WTC11 (cell line): ENCODE measurements at regions of chr19 and their contacts with region 1.

Region 1: GRCh38 chr19:53912653-53913052 is 3.6 kb downstream of the CACNG7 start:
- DNase-seq: peak; percentile 88
- ATAC-seq: peak; percentile 49
- H3K4me3 Mint-ChIP-seq: no peak overlapping the region
- H3K27ac Mint-ChIP-seq: no peak overlapping the region; the same call in 1 of the 2 replicates
- H3K4me1 Mint-ChIP-seq: peaks cover 17% of the 10 kb centered on the region
- H3K27me3 Mint-ChIP-seq: peaks cover 34% of the 10 kb centered on the region
- CTCF ChIP-seq: peak; percentile 92

Region 2: GRCh38 chr19:52307275-52307674 is 1605.4 kb before region 1 on chr19:
- CTCF ChIA-PET with region 1: no interaction called
- POLR2A ChIA-PET with region 1: no interaction called
- DNase-seq: peak; percentile 35
- ATAC-seq: no peak
- H3K4me3 Mint-ChIP-seq: no peak overlapping the region
- H3K27ac Mint-ChIP-seq: no peak overlapping the region
- H3K4me1 Mint-ChIP-seq: no peaks in the 10 kb centered on the region
- H3K27me3 Mint-ChIP-seq: peaks cover 9% of the 10 kb centered on the region
- CTCF ChIP-seq: no peak

Region 3: DNA sequence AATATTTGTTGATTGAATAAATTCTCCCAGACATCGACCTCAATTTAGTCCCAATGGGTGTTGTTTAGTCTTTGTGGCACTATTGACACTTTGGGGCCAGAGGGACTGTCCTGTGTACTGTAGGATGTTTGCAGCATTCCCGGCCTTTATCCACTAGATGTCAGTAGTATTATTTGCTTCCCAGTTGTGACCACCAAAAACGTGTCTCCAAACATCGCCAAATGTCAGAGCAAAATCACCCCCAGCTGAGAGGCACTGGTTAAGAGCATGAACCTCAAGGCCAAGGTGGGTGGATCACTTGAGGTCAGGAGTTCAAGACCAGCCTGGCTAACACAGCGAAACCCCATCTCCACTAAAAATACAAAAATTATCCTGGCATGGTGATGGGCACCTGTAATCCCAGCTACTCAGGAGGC is 103.9 kb before region 1 on chr19:
- CTCF ChIA-PET with region 1: interaction called, 24 read pairs
- POLR2A ChIA-PET with region 1: no interaction called
- DNase-seq: peak; percentile 40
- ATAC-seq: peak; percentile 74
- H3K4me3 Mint-ChIP-seq: no peak overlapping the region
- H3K27ac Mint-ChIP-seq: no peak overlapping the region
- H3K4me1 Mint-ChIP-seq: peaks cover 10% of the 10 kb centered on the region
- H3K27me3 Mint-ChIP-seq: peaks cover 9% of the 10 kb centered on the region
- CTCF ChIP-seq: no peak

Region 4: GRCh38 chr19:53892981-53893325 is 19.7 kb before region 1 on chr19:
- CTCF ChIA-PET with region 1: interaction called, 58 read pairs
- POLR2A ChIA-PET with region 1: interaction called, 4 read pairs
- DNase-seq: peak; percentile 69
- ATAC-seq: peak; percentile 61
- H3K4me3 Mint-ChIP-seq: no peak overlapping the region
- H3K27ac Mint-ChIP-seq: peak overlapping the region; percentile 91; the same call in 1 of the 2 replicates
- H3K4me1 Mint-ChIP-seq: peaks cover 35% of the 10 kb centered on the region
- H3K27me3 Mint-ChIP-seq: peaks cover 2% of the 10 kb centered on the region; the same call in 1 of the 2 replicates
- CTCF ChIP-seq: no peak

Region 5: GRCh38 chr19:53936029-53936428 is 23.4 kb after region 1 on chr19:
- CTCF ChIA-PET with region 1: interaction called, 102 read pairs
- POLR2A ChIA-PET with region 1: no interaction called
- DNase-seq: no peak
- ATAC-seq: peak; percentile 67; the same call in 1 of the 2 replicates
- H3K4me3 Mint-ChIP-seq: no peak overlapping the region
- H3K27ac Mint-ChIP-seq: 0 out of 2 replicates have a peak overlapping the region, but pooled peaks have one; percentile 28
- H3K4me1 Mint-ChIP-seq: peaks cover 7% of the 10 kb centered on the region
- H3K27me3 Mint-ChIP-seq: no peaks in the 10 kb centered on the region; the same call in 1 of the 2 replicates
- CTCF ChIP-seq: no peak

Region 6: GRCh38 chr19:53958168-53958571 is 45.5 kb after region 1 on chr19:
- CTCF ChIA-PET with region 1: interaction called, 10 read pairs
- POLR2A ChIA-PET with region 1: no interaction called
- DNase-seq: peak; percentile 85
- ATAC-seq: peak; percentile 27
- H3K4me3 Mint-ChIP-seq: peak overlapping the region; percentile 79
- H3K27ac Mint-ChIP-seq: peak overlapping the region; percentile 77
- H3K4me1 Mint-ChIP-seq: peaks cover 49% of the 10 kb centered on the region
- H3K27me3 Mint-ChIP-seq: no peaks in the 10 kb centered on the region; the same call in 1 of the 2 replicates
- CTCF ChIP-seq: no peak

Region 7: GRCh38 chr19:54023191-54023590 is 110.5 kb after region 1 on chr19:
- CTCF ChIA-PET with region 1: interaction called, 26 read pairs
- POLR2A ChIA-PET with region 1: no interaction called
- DNase-seq: no peak
- ATAC-seq: no peak
- H3K4me3 Mint-ChIP-seq: no peak overlapping the region
- H3K27ac Mint-ChIP-seq: no peak overlapping the region
- H3K4me1 Mint-ChIP-seq: peaks cover 14% of the 10 kb centered on the region
- H3K27me3 Mint-ChIP-seq: peaks cover 14% of the 10 kb centered on the region
- CTCF ChIP-seq: no peak